H1 (cell line): ENCODE measurements at regions of chr2 and their contacts with region 1.

Region 1: DNA sequence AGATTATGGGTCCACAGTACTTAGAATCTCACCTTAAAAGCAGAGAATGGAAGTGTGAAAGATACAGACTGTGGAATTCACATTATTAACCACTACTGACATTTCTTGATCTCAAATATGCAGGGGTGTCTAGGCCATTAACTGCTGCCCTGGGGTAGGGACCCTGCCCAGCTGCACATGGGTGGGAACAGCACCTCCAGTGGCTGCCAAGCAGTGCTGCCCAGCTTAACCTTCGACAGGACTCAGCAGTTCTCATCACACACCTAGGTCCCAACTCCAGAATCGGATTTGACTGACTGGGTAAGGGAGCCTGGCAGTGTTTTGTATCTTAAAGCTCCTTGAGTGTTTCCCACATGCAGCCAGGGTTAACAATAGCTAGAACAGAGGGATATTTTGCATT is 14.9 kb downstream of the ERFE start:
- DNase-seq: no peak
- H3K4me3 ChIP-seq: no peak overlapping the region
- H3K27ac ChIP-seq: no peak overlapping the region
- H3K4me1 ChIP-seq: no peaks in the 10 kb centered on the region
- H3K27me3 ChIP-seq: no peaks in the 10 kb centered on the region
- CTCF ChIP-seq: peak; percentile 42 to 68 (median 63)
- EP300 ChIP-seq: no peak
- POLR2A ChIP-seq: no peak
- RAD21 ChIP-seq: peak; percentile 14 to 32; a peak in 3 of 4 replicates

Region 2: DNA sequence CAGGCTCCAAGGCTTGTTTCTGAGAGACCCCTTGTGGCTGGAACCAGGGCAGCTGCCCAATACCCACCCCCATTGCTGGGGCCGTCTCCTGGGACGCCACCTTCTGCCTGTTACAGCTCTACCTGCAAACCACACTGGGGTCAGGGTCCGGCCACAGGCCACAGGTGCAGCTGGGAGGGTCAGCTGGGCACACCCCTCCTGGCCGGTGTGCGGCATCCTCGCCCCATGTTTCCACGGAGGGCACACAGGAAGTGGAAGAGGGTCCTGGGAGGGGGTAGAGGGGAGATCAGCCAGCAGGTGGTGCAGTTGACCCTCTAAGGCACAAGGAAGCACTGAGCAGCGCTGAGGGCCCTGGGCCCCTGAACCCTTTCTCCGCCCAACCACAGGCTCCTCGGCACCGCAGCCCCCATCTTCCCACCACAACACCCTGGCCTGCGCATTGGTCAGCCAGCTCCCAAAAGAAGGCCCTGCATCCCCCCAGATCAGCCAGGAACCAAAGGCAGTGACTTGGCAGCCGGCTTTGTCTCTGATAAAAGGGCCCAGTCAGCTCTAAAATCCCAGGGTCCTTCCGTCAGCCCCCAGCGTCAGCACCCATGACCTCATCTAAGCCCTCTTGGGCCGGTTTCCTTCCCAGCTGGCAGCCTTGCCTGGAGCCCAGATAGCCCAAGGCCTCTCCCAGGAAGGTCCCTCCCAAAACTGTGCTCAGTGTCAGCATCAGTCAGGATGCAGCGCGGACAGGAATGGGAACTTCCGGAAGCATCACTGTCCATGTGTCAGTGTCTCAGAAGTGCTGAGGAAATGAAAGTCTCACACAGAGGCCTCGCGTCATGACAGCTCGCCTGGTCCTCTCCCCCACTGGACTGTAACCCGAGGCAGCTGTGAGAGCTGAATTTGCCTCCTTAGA is 13.2 kb before region 1 on chr2:
- CTCF ChIA-PET with region 1: interaction called, 10 read pairs
- POLR2A ChIA-PET with region 1: interaction called, 5 read pairs
- DNase-seq: peak; percentile 15 to 74
- H3K4me3 ChIP-seq: no peak overlapping the region; a peak in 2 of 8 replicates
- H3K27ac ChIP-seq: no peak overlapping the region
- H3K4me1 ChIP-seq: peaks cover 0 to 21% (median 5%) of the 10 kb centered on the region in 4 experiments; a peak in 5 of 7 replicates
- H3K27me3 ChIP-seq: peaks cover 21 to 67% (median 50%) of the 10 kb centered on the region in 4 experiments
- CTCF ChIP-seq: peak in 2 of 3 experiments; percentile 43 to 48; a peak in 3 of 4 replicates
- EP300 ChIP-seq: no peak
- POLR2A ChIP-seq: no peak
- RAD21 ChIP-seq: peak; percentile 15 to 41